Adrenal gland (tissue), 19 donors: ENCODE measurements at regions of chr12 and their contacts with region 1.

Region 1: DNA sequence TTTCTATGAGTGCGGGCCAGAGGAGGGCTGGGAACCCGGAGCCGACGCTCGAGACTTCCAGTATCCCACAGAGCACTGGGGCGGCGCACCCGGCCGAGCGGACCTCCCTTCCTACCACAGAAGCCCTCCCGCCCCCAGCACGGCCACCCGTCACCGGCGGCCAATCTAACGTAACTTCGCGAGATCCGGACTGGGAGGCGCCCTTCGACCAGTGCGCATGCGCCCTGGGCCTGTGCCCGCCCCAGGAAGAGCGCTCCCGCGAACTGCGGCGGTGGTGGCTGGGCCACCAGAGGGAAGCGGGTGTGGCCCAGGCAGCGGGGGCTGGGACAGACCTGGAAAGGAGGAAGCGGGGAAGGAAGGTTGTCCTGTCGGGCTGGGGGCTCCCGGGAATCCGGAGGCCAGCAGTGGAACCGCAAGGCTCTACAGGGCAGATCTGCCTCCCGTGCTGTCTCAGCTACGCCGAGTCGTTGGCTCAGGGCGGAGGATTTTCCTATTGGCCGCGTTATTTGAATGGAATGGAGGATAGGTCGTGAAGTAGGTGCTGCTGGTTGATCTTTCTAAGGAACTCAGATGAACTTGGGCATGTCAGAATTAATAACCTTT is at the start of gene PPP1R12A:
- DNase-seq: peak; percentile 96 to 98 (median 97)
- H3K4me3 ChIP-seq: peak within 1 kb of the TSS; percentile 64 to 99 (median 79)
- H3K27ac ChIP-seq: peak within 1 kb of the TSS; percentile 86 to 98 (median 93)
- H3K4me1 ChIP-seq: peaks cover 20 to 39% of the 10 kb centered on the region in 2 donors
- H3K27me3 ChIP-seq: no peaks in the 10 kb centered on the region
- CTCF ChIP-seq: peak in 3 of 6 experiments; percentile 24 to 41 (median 33)
- POLR2A ChIP-seq: peak; percentile 94 to 97
- total RNA-seq, gene PPP1R12A: 26.6 to 93.4 (median 51.6) TPM

Region 2: GRCh38 chr12:79747274-79747673 is 187.8 kb before region 1 on chr12:
- intact Hi-C with region 1: no loop called
- DNase-seq: no peak
- H3K4me3 ChIP-seq: no peak overlapping the region
- H3K27ac ChIP-seq: no peak overlapping the region
- H3K4me1 ChIP-seq: no peaks in the 10 kb centered on the region
- H3K27me3 ChIP-seq: no peaks in the 10 kb centered on the region
- CTCF ChIP-seq: no peak
- POLR2A ChIP-seq: no peak

Region 3: GRCh38 chr12:79811351-79811750 is 123.8 kb before region 1 on chr12:
- intact Hi-C with region 1: loop called in 1 of 2 experiments (anchors 10 kb)
- DNase-seq: no peak
- H3K4me3 ChIP-seq: no peak overlapping the region
- H3K27ac ChIP-seq: no peak overlapping the region
- H3K4me1 ChIP-seq: peaks cover 0 to 4% of the 10 kb centered on the region in 2 donors
- H3K27me3 ChIP-seq: no peaks in the 10 kb centered on the region
- CTCF ChIP-seq: no peak
- POLR2A ChIP-seq: no peak

Region 4: DNA sequence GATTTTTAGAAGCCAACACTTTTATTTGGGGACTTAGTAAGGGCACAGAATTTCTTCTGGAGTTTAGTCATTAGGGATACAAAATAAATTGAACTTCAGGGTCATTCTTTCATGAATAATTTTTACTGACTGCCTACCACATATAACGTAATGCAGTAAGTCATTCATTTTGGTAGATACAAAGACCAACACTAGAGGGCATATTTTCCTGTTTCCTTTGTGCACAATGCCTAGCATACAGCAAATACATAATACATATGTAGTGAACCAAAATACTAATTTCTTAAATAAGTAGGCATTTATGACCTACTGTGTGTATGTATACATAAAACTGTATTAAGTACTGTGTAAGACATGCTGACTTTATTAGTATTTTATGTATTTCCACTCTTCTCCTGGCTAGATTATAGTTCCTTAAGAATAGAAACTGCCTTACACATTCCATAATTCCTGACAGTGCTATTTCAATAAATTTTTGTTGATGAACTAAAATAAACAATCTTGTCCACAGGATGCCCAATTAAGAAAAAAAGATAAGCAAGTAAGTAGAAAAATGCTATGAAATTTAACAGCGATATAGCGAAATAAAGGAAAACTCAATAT is 48.1 kb before region 1 on chr12:
- intact Hi-C with region 1: loop called in 1 of 2 experiments (anchors 5 kb)
- DNase-seq: no peak
- H3K4me3 ChIP-seq: no peak overlapping the region
- H3K27ac ChIP-seq: no peak overlapping the region
- H3K4me1 ChIP-seq: peaks cover 0 to 55% of the 10 kb centered on the region in 2 donors
- H3K27me3 ChIP-seq: no peaks in the 10 kb centered on the region
- CTCF ChIP-seq: peak; percentile 33 to 61 (median 50)
- POLR2A ChIP-seq: no peak